ENCODE measurements at regions of chr17 and their contacts with region 1.

Region 1: DNA sequence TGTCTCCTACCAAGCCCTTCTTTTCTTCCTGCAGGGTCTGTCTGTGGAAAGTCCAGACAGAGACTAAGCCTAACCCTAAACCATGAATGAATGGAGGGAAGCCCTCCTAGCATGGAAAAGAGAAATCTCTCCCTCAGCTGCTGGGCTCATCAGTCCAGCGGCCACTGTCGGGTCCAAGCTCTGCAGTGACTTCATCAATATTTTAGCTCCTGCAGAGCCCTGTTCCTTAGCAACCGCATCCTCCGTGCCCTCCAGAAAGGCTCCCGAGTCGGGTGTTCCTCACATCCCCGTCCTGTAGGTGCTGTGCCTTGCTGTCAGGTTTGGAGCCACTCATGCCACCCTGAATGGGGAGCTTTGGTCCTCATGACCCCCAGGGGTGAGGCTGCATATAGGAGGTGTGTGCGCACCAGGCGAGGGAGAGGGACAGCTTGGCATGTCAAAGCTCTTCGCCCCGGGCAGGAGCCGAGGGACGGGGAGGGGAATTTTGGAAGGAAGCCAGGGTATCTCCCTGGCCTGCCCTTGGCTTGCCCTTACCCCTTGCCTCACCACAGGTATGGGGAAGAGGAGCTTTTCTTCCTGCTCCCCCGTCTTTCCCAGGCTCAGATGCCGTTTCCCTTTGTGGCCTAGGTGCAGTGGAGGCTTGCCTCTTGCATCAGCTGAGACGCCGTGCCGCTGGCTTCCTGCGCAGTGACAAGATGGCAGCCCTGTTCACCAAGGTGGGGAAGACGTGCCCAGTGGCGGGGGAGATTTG is 23.9 kb downstream of the SGSM2 start:
- DNase-seq: peak; percentile 30
- H3K4me3 ChIP-seq: no peak overlapping the region
- H3K27ac ChIP-seq: no peak overlapping the region
- H3K4me1 ChIP-seq: peaks cover 2 to 16% of the 10 kb centered on the region in 2 experiments; a peak in 2 of 4 replicates
- H3K27me3 ChIP-seq: no peaks in the 10 kb centered on the region
- CTCF ChIP-seq: no peak
- EP300 ChIP-seq: no peak
- RAD21 ChIP-seq: no peak

Region 2: DNA sequence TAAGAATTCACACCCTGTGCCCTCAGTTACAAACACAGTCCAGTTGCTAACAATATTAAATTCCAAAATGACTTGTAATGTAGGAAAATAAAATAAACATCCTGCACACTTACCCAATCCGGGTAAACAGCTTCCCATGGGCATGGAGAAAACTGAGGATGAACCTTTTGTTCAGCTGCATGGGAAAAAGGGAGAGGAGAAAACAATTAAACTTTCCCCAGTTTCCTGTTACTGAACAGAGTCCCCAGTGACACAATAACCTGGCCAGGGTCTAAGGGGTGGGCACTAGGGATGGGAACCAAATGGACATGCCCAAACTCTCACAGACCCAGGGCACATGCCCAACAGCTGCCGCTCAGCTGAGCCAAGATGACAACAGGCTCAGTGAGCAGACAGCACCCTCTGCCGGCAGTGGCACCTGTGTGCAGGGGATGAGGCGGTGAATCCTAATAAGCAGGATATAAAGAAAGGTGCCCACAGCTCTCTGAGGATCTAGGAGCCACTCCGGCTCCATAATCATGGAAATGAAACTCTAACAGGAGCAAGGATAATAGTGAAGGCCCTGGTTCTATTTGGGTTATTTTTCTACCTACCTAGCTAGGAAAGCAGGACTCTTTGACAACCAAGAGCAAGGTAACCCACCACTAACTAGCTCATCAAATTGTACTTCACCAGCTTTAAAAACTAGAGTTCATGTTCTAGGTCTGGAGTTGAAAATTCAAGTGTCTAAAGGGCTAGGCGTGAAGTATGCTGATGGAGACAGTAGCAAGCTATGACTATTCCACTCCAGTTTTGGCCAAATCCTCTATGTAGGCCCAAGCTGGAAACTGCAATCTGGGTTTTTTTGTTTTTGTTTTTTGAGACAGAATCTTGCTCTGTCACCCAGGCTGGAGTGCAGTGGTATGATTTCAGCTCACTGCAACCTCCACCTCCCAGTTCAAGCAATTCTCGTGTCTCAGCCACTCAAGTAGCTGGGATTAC is 116.3 kb before region 1 on chr17:
- CTCF ChIA-PET with region 1: no interaction called
- POLR2A ChIA-PET with region 1: no interaction called
- DNase-seq: peak; percentile 87
- H3K4me3 ChIP-seq: no peak overlapping the region; a peak in 1 of 4 replicates
- H3K27ac ChIP-seq: peak overlapping the region; percentile 18 to 67; a peak in 3 of 4 replicates
- H3K4me1 ChIP-seq: peaks cover 7 to 15% of the 10 kb centered on the region in 2 experiments; a peak in 1 of 4 replicates
- H3K27me3 ChIP-seq: no peaks in the 10 kb centered on the region
- CTCF ChIP-seq: peak; percentile 96
- EP300 ChIP-seq: no peak
- RAD21 ChIP-seq: peak; percentile 98

Region 3: DNA sequence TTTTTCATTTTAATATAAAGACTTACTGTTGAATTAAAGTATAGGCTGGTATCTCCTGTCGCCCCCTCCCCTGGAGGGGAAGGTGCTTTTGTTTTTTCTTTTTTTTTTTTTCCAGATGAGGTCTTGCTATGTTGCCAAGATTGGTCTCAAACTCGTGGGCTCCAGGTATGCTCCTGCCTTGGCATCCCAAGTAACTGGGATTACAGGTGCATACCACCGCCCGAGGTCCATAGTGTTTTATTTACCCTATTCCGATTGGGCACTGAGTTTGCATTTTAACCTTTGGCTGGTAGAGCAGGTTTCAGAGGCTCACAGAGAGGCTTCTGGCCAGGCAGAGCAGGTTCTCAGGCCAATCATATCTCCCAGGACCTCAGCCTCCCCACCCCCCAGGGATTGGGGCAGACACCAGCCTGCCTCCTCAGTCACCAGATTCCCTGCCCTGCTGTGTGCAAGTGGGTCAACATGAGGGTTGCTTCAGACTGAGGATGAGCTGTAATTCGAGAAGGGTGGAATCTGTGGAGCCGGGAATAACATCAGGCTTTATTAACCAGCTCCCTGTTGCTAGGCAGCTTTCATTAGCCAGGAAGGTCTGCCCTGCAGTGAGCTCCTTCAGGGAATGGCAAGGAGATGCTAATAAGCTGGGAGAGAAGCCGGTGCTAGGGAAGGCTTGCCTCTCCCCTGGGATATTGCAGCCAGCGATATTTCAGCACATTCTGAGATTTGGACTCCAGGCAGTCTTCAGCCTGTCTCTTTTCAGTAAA is 13.5 kb before region 1 on chr17:
- CTCF ChIA-PET with region 1: interaction called, 88 read pairs
- POLR2A ChIA-PET with region 1: no interaction called
- DNase-seq: no peak
- H3K4me3 ChIP-seq: no peak overlapping the region
- H3K27ac ChIP-seq: peak overlapping the region; percentile 41 to 44; a peak in 3 of 4 replicates
- H3K4me1 ChIP-seq: peaks cover 6 to 10% of the 10 kb centered on the region in 2 experiments; a peak in 2 of 4 replicates
- H3K27me3 ChIP-seq: no peaks in the 10 kb centered on the region
- CTCF ChIP-seq: no peak
- EP300 ChIP-seq: no peak
- RAD21 ChIP-seq: no peak

Region 4: DNA sequence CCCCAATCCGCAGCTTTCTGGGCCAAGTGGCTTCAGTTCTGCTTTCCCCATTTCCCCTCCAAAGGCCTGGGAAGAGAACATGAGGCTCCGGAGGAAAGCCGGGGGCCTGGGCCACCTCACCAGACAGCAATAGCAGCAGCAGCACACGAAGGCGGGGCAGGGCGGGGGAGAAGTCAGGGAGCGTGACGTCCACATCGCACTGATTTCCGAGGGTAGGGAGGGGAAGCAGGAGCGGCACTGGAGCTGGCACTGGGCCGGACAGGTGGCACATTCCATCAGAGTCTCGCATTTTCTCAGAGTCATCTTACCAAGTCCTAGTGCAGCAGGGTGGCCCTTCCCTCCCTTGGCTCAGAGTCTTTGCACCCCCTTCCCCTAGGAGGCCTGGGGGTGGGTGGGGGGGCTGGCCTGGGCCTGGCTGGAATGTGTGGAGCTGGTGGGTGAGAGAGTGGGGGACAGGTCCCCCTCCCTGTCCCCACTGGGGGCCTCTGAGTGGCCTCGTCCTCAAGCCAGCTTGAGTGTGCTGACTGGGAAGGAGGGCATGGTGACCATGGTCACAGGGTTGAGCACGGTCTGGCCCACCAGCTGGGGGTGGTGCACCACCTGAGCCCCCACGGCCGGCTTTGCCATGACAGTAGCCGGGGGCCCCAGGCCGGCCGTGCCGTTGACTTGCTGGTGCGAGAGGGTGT is 25.4 kb after region 1 on chr17:
- CTCF ChIA-PET with region 1: interaction called, 59 read pairs
- POLR2A ChIA-PET with region 1: no interaction called
- DNase-seq: peak; percentile 10
- H3K4me3 ChIP-seq: no peak overlapping the region
- H3K27ac ChIP-seq: no peak overlapping the region; a peak in 1 of 4 replicates
- H3K4me1 ChIP-seq: peaks cover 0 to 44% of the 10 kb centered on the region in 2 experiments; a peak in 1 of 4 replicates
- H3K27me3 ChIP-seq: no peaks in the 10 kb centered on the region
- CTCF ChIP-seq: no peak
- EP300 ChIP-seq: no peak
- RAD21 ChIP-seq: no peak